GM13976 (cell line): ENCODE measurements at regions of chr2 and their contacts with region 1.

Region 1: GRCh38 chr2:98412751-98413458 is 31.8 kb upstream of the INPP4A start:
- DNase-seq: peak; percentile 60
- CTCF ChIP-seq: peak; percentile 61

Region 2: GRCh38 chr2:99032786-99033185 is 619.9 kb after region 1 on chr2:
- in situ Hi-C with region 1: loop called (anchors 25 kb)
- DNase-seq: no peak
- CTCF ChIP-seq: no peak